Motor neuron (in vitro differentiated cells): ENCODE measurements at regions of chr15 and their contacts with region 1.

Region 1: DNA sequence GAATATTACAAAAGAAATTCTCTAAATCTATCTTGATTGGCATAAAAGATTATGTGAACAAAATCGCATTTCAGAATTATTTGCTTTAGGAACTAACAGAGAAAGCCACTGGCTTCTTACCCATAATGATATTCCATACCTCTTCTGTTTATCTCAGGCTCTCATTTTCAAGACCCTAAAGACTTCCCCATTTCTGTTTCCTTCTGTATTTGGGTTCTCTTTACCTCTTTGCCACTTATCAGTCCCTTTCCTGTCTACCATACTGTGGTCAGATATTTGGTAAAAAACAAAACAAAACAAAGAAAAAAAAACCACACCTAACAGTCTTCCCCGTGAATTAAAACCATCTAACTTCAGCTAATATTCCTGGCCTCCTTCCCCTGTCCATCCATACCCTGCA is 108.5 kb downstream of the LRRC28 start:
- ATAC-seq: no peak
- H3K4me3 ChIP-seq: no peak overlapping the region
- H3K27ac ChIP-seq: no peak overlapping the region
- H3K4me1 ChIP-seq: no peaks in the 10 kb centered on the region

Region 2: DNA sequence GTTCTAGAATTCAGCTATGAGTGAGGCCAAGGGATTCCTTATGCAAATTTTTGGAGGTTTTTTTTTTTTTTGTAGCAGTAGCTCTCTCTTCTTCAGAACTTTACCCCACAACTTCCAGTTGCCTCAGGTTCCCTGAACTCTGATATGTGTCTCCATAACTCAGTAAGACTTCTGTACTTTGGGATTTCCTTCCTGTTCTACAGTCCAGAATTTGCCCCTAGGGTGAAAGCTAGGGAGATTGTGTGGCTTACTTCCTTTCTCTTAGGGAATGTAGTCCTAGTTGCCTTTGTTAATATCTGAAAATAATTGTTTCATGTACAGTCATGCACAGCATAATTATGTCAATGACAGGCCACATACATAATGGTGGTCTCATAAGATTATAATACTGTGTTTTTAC is 77.6 kb before region 1 on chr15:
- in situ Hi-C with region 1: loop called in 1 of 9 experiments (anchors 10 kb)
- ATAC-seq: no peak
- H3K4me3 ChIP-seq: no peak overlapping the region
- H3K27ac ChIP-seq: no peak overlapping the region
- H3K4me1 ChIP-seq: no peaks in the 10 kb centered on the region